ENCODE measurements at regions of chr4 and their contacts with region 1.

Region 1: DNA sequence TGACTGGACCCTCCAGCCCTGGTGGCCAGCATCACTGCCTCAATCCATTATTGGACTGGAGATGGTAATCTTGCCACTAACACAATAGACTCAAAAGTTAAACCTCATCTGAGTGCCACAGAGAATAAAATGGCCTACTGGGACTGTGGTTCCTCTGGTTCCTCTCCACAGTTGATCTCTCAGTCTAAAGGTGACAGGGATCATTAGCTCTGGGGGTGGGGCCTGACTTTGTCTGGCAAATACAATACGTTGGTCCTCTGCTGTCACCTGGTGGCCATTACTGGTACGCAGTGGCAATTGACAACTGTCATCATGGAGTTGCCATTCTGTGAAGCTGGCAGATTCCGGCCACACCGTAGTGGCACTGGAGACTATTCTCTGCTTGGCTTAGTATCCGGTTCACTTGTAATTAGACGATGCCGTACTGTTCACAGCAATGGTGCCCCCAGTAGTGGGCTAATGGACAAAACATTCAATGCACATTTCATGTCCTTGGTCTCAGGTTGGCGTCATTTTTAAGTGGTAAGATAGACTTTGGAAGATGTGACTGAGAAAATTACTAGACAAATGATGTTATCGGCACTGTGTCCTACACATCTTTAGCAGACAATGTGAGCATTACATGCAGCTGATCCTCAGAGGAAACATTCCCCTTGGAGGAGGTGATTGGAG is 6.7 kb downstream of the FGFBP2 start:
- DNase-seq: peak; percentile 72 to 88 (median 81)
- H3K4me3 ChIP-seq: no peak overlapping the region
- H3K4me3 Mint-ChIP-seq: no peak overlapping the region
- H3K27ac ChIP-seq: no peak overlapping the region
- H3K27ac Mint-ChIP-seq: no peak overlapping the region
- H3K4me1 ChIP-seq: no peaks in the 10 kb centered on the region
- H3K4me1 Mint-ChIP-seq: peaks cover 4% of the 10 kb centered on the region
- H3K27me3 ChIP-seq: no peaks in the 10 kb centered on the region
- H3K27me3 Mint-ChIP-seq: peaks cover 0 to 4% (median 3%) of the 10 kb centered on the region in 3 donors
- CTCF ChIP-seq: peak; percentile 91

Region 2: DNA sequence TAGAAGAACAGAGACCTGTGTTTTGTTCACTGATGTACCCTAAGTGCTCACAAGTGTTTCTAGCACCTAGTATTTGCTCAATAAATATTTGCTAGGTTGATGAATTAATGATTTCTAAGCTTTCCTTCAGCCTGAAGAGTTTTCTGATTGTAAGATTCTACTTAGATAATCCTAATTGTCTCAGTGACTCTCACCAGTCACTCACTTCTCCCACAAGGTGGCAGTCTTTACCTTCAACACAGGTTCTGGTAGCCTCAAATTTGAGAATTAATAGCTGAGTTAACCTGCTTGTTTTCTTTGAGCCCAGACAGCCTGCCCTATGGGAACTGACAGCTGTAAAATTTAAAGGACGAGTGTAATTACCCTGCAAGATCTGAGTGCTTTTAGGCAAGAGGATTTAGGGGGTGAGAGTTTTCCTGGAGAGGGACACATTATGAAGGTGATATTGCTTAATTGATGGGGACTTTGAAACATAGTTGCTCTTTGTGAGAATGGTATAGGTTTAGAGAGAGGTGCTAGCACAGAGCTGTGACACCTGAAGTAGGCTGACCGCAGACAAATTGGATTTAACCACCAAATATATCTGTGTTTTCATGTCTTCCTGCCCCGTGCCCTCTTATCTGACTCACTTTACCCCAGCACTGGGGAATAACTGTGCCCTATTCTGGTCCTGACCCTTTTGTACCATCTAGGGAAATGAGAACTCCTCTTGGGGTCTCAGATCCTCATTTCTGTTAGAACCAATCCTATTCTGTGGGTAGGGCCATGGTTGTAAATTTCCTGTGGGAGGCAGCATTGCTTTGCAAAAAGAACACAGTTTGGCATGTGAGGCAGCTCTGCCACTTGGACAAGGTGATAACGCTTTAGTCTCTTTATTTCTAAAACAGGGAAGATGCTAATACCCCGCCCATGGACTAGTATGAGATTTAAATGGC is 150.5 kb before region 1 on chr4:
- intact Hi-C with region 1: loop called (anchors 5 kb)
- DNase-seq: peak; percentile 47 to 71 (median 65)
- H3K4me3 ChIP-seq: no peak overlapping the region
- H3K4me3 Mint-ChIP-seq: no peak overlapping the region
- H3K27ac ChIP-seq: no peak overlapping the region
- H3K27ac Mint-ChIP-seq: peak overlapping the region in 2 of 7 donors; percentile 13 to 17
- H3K4me1 ChIP-seq: peaks cover 30% of the 10 kb centered on the region in 2 donors
- H3K4me1 Mint-ChIP-seq: peaks cover 46% of the 10 kb centered on the region
- H3K27me3 ChIP-seq: no peaks in the 10 kb centered on the region
- H3K27me3 Mint-ChIP-seq: peaks cover 0 to 3% (median 0%) of the 10 kb centered on the region in 3 donors
- CTCF ChIP-seq: peak; percentile 84

Region 3: GRCh38 chr4:16001484-16001858 is 45.2 kb after region 1 on chr4:
- intact Hi-C with region 1: loop called in 1 of 2 experiments (anchors 5 kb)
- DNase-seq: peak; percentile 73 to 82 (median 75)
- H3K4me3 ChIP-seq: no peak overlapping the region
- H3K4me3 Mint-ChIP-seq: no peak overlapping the region
- H3K27ac ChIP-seq: no peak overlapping the region
- H3K27ac Mint-ChIP-seq: no peak overlapping the region
- H3K4me1 ChIP-seq: peaks cover 0 to 6% of the 10 kb centered on the region in 2 donors
- H3K4me1 Mint-ChIP-seq: no peaks in the 10 kb centered on the region
- H3K27me3 ChIP-seq: no peaks in the 10 kb centered on the region
- H3K27me3 Mint-ChIP-seq: peaks cover 0 to 2% (median 0%) of the 10 kb centered on the region in 3 donors
- CTCF ChIP-seq: peak; percentile 85